ENCODE measurements at regions of chr17 and their contacts with region 1.

Region 1: DNA sequence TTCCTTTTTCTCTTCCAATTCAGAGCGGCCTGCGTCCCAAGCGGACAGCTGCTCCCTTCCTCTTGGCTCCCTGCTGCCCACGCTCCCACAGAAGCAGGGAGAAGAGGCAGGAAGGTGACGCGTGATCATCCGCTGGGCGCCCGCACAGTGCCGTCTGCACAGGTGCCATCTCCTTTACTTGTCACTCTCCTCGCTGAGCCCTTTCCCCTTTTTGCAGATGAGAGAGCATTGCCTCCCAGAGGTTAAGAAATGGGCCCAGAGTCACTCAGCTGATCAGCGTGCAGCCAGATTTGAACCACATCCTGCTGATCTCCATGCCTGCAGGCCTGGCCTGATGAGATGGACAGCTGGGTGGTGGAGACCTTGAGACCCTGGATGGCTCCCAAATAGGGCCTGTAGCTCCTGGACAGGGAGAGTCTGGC is 299.8 kb downstream of the SEC14L1 start:
- DNase-seq: no peak
- H3K4me3 ChIP-seq: no peak overlapping the region
- H3K27ac ChIP-seq: peak overlapping the region; percentile 14 to 43
- H3K4me1 ChIP-seq: peaks cover 38% of the 10 kb centered on the region
- H3K27me3 ChIP-seq: no peaks in the 10 kb centered on the region
- CTCF ChIP-seq: no peak
- POLR2A ChIP-seq: no peak

Region 2: DNA sequence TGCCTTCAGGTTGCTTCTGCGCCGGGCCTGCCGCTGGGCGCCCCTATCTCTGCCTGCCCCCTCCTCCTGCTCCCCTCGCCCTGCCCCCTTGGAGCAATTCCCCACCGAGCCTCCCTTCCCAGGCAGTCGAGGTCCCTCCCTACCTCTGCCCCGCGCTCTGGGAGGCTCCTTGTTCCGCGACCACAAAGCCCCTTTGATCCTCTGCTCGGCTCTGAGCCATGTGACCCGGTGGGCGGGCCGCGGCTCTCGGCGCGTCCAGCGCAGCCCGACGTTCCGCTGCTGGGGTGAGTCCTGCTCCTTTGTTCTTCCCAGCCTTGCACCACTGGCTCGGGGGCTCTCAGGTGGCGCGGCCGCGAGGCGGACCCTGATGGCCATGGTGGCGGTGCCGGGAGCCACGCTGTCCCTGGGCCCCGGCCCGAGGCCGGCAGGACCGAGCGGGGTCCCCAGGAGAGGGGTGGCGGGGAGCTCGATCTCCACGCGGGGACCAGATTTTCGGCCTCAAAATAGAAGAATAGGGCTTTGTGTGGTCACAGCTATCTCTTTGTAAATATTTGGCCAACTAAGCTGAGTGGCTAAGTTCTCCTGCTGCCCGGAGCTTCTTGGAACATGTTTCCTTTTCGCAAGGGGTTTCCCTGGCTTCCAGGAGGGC is 10.8 kb after region 1 on chr17:
- intact Hi-C with region 1: loop called (anchors 1 kb)
- DNase-seq: peak; percentile 66
- H3K4me3 ChIP-seq: peak overlapping the region; percentile 41 to 42
- H3K27ac ChIP-seq: peak overlapping the region; percentile 81 to 91
- H3K4me1 ChIP-seq: peaks cover 55% of the 10 kb centered on the region
- H3K27me3 ChIP-seq: no peaks in the 10 kb centered on the region
- CTCF ChIP-seq: no peak
- POLR2A ChIP-seq: peak; percentile 36

Measured in prostate gland (tissue), 2 donors.